ENCODE measurements at regions of chr16 and their contacts with region 1.

Region 1: GRCh38 chr16:88672776-88673175 is 9.9 kb upstream of the MVD start:
- DNase-seq: peak; percentile 80
- ATAC-seq: peak; percentile 98
- H3K4me3 Mint-ChIP-seq: no peak overlapping the region
- H3K27ac Mint-ChIP-seq: peak overlapping the region; percentile 49; the same call in 1 of the 2 replicates
- H3K4me1 Mint-ChIP-seq: no peaks in the 10 kb centered on the region; the same call in 1 of the 2 replicates
- H3K27me3 Mint-ChIP-seq: no peaks in the 10 kb centered on the region
- CTCF ChIP-seq: no peak

Region 2: GRCh38 chr16:88633684-88634140 is 39.1 kb before region 1 on chr16:
- CTCF ChIA-PET with region 1: interaction called, 19 read pairs
- POLR2A ChIA-PET with region 1: no interaction called
- DNase-seq: peak; percentile 67
- ATAC-seq: peak; percentile 45
- H3K4me3 Mint-ChIP-seq: peak overlapping the region; percentile 69
- H3K27ac Mint-ChIP-seq: no peak overlapping the region
- H3K4me1 Mint-ChIP-seq: peaks cover 33% of the 10 kb centered on the region
- H3K27me3 Mint-ChIP-seq: peaks cover 10% of the 10 kb centered on the region
- CTCF ChIP-seq: no peak

Region 3: DNA sequence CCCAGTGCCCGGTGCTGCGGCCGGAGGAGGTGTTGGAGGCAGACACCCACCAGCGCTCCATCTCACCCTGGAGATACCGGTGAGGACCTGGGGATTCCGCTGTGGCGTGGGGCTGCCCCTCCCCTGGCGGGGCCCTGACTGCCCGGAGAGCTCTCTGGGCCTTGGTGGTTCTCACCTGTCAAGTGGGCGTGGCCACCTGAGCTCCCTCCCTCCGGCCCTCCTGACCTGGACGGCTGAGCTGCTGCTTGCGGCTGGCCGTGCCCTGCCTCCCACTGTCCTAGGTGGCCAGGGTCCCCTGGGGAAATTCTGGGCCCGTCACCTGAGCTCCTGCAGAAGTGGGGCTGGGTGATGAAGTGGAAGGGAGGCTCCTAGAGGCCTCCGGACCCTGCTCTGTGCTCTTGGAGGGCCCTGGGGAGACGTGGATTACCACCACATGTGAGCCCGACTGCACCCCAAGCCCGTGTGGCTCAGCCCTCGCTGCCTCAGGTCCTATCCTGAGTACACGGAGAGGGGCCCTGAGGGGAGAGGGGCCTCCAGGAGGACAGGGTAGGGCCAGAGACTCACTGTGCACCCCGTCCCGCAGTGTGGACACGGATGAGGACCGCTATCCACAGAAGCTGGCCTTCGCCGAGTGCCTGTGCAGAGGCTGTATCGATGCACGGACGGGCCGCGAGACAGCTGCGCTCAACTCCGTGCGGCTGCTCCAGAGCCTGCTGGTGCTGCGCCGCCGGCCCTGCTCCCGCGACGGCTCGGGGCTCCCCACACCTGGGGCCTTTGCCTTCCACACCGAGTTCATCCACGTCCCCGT is 33.3 kb before region 1 on chr16:
- CTCF ChIA-PET with region 1: interaction called, 19 read pairs
- POLR2A ChIA-PET with region 1: no interaction called
- DNase-seq: peak; percentile 89
- ATAC-seq: peak; percentile 61
- H3K4me3 Mint-ChIP-seq: peak overlapping the region; percentile 33; the same call in 1 of the 2 replicates
- H3K27ac Mint-ChIP-seq: no peak overlapping the region
- H3K4me1 Mint-ChIP-seq: peaks cover 38% of the 10 kb centered on the region
- H3K27me3 Mint-ChIP-seq: peaks cover 22% of the 10 kb centered on the region
- CTCF ChIP-seq: no peak

Region 4: GRCh38 chr16:88686439-88687253 is 13.9 kb after region 1 on chr16 and contains the start of gene SNAI3:
- CTCF ChIA-PET with region 1: interaction called, 111 read pairs
- POLR2A ChIA-PET with region 1: no interaction called
- DNase-seq: peak; percentile 95
- ATAC-seq: peak; percentile 92
- H3K4me3 Mint-ChIP-seq: peak within 1 kb of the TSS; percentile 74
- H3K27ac Mint-ChIP-seq: no peak within 1 kb of the TSS
- H3K4me1 Mint-ChIP-seq: peaks cover 15% of the 10 kb centered on the region
- H3K27me3 Mint-ChIP-seq: peaks cover 28% of the 10 kb centered on the region
- CTCF ChIP-seq: no peak
- total RNA-seq, gene SNAI3: 8.0 to 9.4 TPM (median 9.1 TPM) in 3 replicates

Region 5: GRCh38 chr16:88700636-88701482 is 28.1 kb after region 1 on chr16:
- CTCF ChIA-PET with region 1: interaction called, 21 read pairs
- POLR2A ChIA-PET with region 1: no interaction called
- DNase-seq: no peak
- ATAC-seq: no peak
- H3K4me3 Mint-ChIP-seq: no peak overlapping the region
- H3K27ac Mint-ChIP-seq: no peak overlapping the region
- H3K4me1 Mint-ChIP-seq: peaks cover 10% of the 10 kb centered on the region
- H3K27me3 Mint-ChIP-seq: no peaks in the 10 kb centered on the region
- CTCF ChIP-seq: no peak

Region 6: DNA sequence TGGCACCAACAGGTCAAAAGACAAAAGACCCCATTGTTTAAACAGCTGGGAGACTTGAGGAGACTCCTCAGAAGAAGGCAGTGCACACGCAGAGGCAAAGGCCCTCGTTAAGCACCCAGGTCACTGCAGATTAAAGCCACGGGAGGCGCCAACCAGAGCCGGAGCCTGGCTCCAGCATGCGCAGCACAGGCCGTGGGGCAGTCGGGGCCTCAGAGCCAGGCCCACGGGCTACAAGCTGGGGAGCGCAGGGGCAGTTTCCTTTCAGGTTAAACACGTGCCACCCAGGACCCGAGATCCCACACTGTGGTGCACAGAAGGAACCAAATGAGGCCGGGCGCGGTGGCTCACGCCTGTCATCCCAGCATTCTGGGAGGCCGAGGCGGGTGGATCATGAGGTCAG is 103.0 kb after region 1 on chr16:
- CTCF ChIA-PET with region 1: no interaction called
- POLR2A ChIA-PET with region 1: no interaction called
- DNase-seq: no peak
- ATAC-seq: no peak
- H3K4me3 Mint-ChIP-seq: no peak overlapping the region
- H3K27ac Mint-ChIP-seq: no peak overlapping the region
- H3K4me1 Mint-ChIP-seq: peaks cover 12% of the 10 kb centered on the region
- H3K27me3 Mint-ChIP-seq: no peaks in the 10 kb centered on the region
- CTCF ChIP-seq: no peak

Measured in WTC11 (cell line).